ENCODE measurements at regions of chr12 and their contacts with region 1.

Region 1: DNA sequence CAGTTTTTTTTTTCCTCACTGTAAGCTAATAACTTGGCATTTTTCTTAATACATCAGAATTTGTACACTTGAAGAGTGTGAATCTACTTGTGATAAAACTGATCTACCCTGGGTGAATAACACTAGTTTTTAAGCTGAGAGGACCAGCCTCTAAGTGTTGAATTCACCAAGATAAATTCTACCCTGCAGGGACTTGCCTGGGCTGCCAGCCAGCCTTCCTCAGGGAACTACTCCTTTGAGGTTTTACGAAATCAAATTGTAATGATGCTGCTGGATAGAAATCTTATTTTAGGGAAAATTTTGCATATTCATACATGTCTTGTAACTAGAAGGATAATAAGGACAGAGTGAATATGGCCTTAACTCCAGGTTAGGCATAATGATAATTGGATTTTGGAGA is 1.9 kb downstream of the MED21 start:
- DNase-seq: no peak
- ATAC-seq: no peak
- H3K4me3 ChIP-seq: no peak overlapping the region
- H3K27ac ChIP-seq: no peak overlapping the region
- H3K4me1 ChIP-seq: peaks cover 2 to 4% of the 10 kb centered on the region in 2 donors
- H3K27me3 ChIP-seq: no peaks in the 10 kb centered on the region

Region 2: DNA sequence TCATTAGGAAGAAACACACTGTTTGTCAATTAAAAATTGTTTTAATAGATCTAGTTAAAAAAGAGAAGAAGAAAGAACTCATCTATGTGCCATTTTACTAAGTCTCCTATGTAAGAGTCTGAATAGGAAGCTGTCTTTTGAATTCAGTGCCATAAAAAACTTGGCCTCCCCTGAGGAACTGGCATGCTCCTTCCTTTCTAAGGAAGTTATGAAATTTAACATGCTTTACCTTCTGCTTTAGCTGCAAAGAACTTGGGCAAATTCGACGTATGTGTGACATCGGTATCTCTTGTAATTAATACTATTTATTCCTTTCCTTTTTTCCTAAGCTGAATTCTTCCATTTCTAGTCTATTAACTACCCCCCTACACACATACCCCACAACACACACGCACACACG is 22.6 kb before region 1 on chr12:
- intact Hi-C with region 1: no loop called
- DNase-seq: no peak
- ATAC-seq: no peak
- H3K4me3 ChIP-seq: no peak overlapping the region
- H3K27ac ChIP-seq: no peak overlapping the region
- H3K4me1 ChIP-seq: no peaks in the 10 kb centered on the region
- H3K27me3 ChIP-seq: no peaks in the 10 kb centered on the region

Region 3: DNA sequence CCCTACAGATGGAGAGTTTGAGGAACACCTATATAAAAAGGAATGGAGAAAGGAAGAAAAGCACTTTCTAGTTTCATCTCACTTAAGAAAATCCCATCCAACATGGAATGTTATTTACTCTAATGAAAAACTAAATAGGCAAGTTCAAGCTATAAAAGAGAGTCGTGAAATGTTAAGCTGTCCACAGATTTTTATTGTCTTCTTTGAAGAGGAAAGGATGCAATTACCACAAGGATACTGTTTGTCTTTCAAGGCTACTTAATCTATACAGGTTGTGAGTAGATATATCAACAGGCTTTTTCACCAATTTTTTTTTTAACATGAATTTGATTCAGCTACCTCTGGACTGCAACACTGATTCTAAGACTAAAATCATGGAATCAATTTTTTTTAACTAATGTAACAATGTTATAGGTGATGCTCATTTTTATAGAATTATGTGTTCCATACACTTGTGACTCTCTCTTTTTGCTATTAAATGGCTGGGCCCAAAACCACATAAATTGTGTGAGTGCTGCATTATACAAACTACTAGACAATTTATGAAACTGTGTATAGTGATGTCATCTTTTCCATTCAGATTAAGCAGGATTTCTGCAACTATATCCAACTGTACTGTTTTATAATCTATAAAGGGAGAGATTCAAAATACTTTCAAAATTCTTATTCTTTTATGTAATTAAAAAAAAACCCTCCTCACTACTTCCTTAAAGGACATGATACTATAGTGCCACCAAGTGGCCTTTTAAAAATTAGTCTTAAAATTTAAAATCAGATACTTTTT is 281.6 kb after region 1 on chr12:
- intact Hi-C with region 1: loop called (anchors 5 kb)
- DNase-seq: no peak
- ATAC-seq: peak; percentile 73
- H3K4me3 ChIP-seq: no peak overlapping the region
- H3K27ac ChIP-seq: no peak overlapping the region
- H3K4me1 ChIP-seq: no peaks in the 10 kb centered on the region
- H3K27me3 ChIP-seq: no peaks in the 10 kb centered on the region